Kidney (tissue), 22 donors: ENCODE measurements at regions of chr11 and their contacts with region 1.

Region 1: GRCh38 chr11:73177778-73178577 is 35.9 kb upstream of the FCHSD2 start:
- DNase-seq: peak; percentile 73 to 92 (median 80)
- H3K4me3 ChIP-seq: no peak overlapping the region
- H3K27ac ChIP-seq: peak overlapping the region in 1 of 2 donors; percentile 50
- H3K4me1 ChIP-seq: peaks cover 2 to 13% (median 13%) of the 10 kb centered on the region in 3 donors
- H3K27me3 ChIP-seq: no peaks in the 10 kb centered on the region
- CTCF ChIP-seq: peak; percentile 91

Region 2: DNA sequence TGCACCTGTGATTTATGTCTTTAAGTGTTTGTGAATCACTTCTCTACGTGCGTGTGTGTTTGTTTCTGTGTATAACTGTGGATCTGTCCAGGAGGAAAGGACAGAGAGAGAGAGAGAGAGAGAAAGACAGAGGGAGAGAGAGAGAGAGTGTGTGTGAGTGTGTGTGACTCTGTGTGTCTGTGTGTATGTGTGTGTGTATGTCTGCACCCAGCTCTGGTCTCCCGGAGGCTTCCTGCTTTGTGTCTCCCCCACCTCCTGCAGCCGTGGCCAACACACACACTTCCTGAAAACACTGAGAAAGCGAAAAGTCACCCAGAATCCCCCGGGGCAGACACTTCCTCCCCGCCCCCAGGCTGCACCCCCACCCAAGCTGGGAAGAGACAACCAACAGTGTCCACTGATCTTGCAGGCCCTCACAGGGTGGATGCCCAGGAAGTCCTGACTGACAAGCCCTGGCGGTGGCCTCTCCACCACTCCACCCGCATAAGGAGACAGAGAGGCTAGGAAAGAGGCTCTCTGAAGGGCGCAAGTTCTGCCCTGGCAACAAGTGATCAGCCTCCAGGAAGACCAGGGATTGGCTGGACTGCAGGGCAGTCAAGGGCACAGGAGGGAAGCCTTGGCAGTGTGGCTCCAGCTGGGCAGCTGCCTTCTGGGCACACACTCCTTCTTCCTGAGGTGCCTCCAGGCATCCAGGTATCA is 455.8 kb before region 1 on chr11:
- intact Hi-C with region 1: loop called (anchors 10 kb)
- DNase-seq: peak; percentile 92 to 97 (median 95)
- H3K4me3 ChIP-seq: peak overlapping the region; percentile 83 to 98 (median 87)
- H3K27ac ChIP-seq: peak overlapping the region; percentile 92 to 93
- H3K4me1 ChIP-seq: peaks cover 4 to 50% (median 17%) of the 10 kb centered on the region in 3 donors
- H3K27me3 ChIP-seq: no peaks in the 10 kb centered on the region
- CTCF ChIP-seq: no peak

Region 3: GRCh38 chr11:72831513-72832300 is 346.3 kb before region 1 on chr11:
- intact Hi-C with region 1: loop called (anchors 5 kb)
- DNase-seq: peak; percentile 83 to 94 (median 91)
- H3K4me3 ChIP-seq: no peak overlapping the region
- H3K27ac ChIP-seq: peak overlapping the region; percentile 26 to 51
- H3K4me1 ChIP-seq: peaks cover 0 to 17% (median 0%) of the 10 kb centered on the region in 3 donors
- H3K27me3 ChIP-seq: no peaks in the 10 kb centered on the region
- CTCF ChIP-seq: peak; percentile 98